ENCODE measurements at regions of chr10 and their contacts with region 1.

Region 1: DNA sequence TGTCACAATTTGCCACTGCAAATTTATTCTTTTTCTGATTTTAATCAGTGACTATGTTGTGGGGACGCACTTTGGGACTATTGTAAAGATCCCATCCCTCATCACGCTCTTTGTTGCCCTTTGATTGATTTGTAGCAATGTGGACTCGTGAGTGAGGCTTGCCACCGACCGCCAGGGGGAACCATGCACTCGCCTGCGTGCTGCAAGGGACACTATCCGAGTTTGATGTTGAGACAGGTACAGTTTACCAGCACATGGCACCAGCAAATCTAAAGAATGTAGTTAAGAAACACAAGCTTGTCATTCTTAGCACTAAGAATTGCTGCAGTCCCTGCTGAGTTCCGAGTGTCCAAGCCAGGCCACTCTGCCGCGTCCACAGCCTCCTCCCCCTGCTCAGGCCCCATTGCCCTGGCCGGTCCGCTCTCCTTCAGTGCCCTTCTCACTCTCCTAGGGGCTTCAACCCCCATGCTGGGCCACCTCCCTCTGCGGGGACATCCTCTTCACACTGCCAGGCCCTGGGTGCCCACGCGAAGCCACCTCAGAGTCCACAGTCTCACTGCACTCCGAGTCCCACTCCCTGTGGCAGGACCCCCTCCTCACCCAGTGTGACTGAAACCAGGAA is 2.0 kb upstream of the SFTPA2 start:
- DNase-seq: no peak
- ATAC-seq: peak; percentile 64
- H3K4me3 Mint-ChIP-seq: no peak overlapping the region
- H3K27ac Mint-ChIP-seq: no peak overlapping the region
- H3K4me1 Mint-ChIP-seq: peaks cover 2% of the 10 kb centered on the region
- H3K27me3 Mint-ChIP-seq: peaks cover 24% of the 10 kb centered on the region
- CTCF ChIP-seq: peak; percentile 57

Region 2: DNA sequence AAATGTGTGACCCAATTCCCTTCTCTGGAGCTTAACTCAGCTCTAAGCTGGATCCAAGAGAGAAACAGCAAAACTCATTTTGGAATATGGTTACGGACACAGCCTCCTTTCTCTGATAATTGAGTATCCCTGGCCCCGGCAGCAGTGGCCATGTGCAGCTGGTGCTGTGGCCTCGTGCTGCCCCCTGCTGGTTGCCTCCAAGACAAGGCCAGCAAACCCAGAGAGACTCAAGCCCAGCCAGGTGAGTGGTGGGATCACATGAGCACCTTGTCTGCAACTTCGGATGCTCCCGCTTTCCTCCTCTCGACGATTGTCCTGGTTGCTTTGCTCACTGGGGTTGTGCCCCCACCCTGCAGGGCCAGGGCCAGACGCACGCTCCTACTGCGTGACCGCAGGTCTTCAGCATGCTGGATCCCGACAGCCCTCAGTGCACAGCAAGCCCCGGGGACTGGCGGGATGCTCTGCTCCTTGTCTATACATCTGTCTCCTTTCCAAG is 367.2 kb after region 1 on chr10:
- CTCF ChIA-PET with region 1: no interaction called
- POLR2A ChIA-PET with region 1: no interaction called
- intact Hi-C with region 1: loop called (anchors 1 kb)
- DNase-seq: no peak
- ATAC-seq: peak; percentile 78
- H3K4me3 Mint-ChIP-seq: no peak overlapping the region
- H3K27ac Mint-ChIP-seq: no peak overlapping the region
- H3K4me1 Mint-ChIP-seq: no peaks in the 10 kb centered on the region
- H3K27me3 Mint-ChIP-seq: peaks cover 18% of the 10 kb centered on the region
- CTCF ChIP-seq: no peak

Measured in activated B cell treated with CpG ODN at 0.5 μM for 24 hours (primary cell).